ENCODE measurements at regions of chr10 and their contacts with region 1.

Region 1: DNA sequence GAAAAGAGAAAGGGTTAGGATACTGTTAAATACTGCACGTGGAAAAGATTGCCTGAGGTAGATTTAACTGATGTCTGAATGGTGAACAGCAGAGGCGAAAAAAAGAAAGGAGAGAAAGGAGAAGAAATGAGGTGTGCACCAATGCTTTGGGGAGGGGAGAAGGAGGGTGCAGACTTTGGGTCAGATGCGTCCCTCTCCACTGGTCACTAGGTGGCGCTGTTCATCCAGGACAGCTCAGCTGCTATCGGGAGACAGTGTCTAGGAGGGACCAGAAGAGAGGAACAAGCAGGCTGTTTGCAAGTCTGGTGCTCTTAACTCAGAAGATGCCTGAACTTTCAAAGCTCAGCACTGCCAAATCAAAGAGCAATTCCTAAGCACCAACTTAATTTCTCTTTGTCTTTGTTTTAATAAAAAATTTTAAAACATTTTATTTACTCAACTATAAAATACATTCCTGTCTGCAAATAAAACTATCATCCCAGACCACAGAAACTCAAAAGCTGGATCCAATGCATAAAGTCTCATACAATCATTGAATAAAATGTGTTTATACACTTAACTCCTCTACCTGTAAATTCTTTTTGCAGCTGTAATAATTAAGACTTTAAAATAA is 83.9 kb upstream of the PDLIM1 start:
- DNase-seq: peak; percentile 66 to 91 (median 76)
- H3K4me3 ChIP-seq: no peak overlapping the region
- H3K27ac ChIP-seq: no peak overlapping the region
- H3K4me1 ChIP-seq: peaks cover 0 to 2% (median 0%) of the 10 kb centered on the region in 3 donors
- H3K27me3 ChIP-seq: no peaks in the 10 kb centered on the region
- CTCF ChIP-seq: peak; percentile 83

Region 2: DNA sequence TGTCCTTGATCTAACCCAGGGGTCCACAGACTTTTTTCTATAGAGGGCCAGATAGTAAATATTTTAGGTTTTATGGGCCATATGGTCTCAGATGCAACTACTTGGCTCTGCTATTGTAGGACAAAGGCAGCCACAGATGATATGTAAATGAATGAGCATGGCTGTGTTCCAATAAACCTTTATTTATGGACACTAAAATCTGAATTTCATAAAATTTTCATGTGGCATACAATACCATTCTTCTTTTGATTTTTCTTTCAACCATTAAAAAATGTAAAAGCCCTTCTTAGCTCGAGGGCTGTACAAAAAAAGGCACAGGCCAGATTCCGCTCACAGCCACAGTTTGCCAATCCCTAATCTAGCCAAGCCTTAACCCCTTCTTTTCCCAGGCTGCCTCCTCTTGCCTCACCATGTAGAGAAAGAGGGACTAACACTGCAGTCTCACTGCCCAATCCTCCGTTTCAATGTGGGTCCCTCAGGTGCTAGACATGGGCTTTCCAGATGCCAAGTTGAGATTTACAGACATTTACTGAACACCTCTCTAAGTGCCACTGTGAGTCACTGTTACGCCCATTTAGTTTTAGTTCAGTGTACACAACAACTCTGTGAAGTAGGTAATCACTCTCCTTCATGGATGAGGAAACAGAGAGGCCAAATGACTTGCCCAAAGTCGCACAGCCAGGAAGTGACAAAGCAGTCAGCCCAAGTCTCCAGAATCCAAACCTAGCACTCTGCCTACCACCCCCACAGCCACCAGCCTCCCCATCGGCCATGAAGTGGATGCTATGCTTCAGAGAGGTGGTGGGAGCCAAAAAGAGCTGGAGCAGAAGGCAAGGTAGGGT is 48.7 kb after region 1 on chr10:
- intact Hi-C with region 1: loop called (anchors 10 kb)
- DNase-seq: no peak
- H3K4me3 ChIP-seq: no peak overlapping the region
- H3K27ac ChIP-seq: no peak overlapping the region
- H3K4me1 ChIP-seq: peaks cover 0 to 2% (median 0%) of the 10 kb centered on the region in 3 donors
- H3K27me3 ChIP-seq: no peaks in the 10 kb centered on the region
- CTCF ChIP-seq: no peak

Region 3: DNA sequence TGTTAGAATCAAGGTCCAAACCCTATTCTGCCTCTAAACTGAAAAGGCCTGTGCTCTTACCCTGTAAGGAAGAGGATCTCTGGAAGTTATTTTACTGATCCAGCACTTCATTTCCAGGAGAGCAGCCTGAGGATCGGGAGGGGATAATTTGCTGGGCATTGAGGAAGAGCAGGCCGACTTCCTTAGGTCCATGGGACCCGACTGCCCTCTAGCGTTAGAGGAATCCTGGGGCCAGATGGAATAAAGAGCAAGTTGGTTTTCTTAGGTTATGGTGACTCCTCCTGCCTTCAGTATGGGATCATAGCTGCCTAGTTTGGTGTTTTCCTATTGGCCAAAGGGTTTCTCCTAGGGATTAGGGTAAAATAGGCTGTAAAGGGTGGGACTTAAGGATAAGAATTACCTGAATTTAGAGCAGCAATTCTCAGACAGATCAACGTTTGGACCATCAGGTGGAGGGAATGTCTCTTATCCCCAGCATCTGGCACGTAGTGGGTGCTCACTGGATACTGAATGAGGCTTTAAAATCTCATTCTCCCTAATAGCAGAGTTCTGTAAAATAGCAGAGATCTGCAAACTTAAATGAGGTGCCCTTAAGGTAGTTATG is 226.5 kb after region 1 on chr10:
- intact Hi-C with region 1: loop called (anchors 10 kb)
- DNase-seq: peak; percentile 83 to 97 (median 89)
- H3K4me3 ChIP-seq: no peak overlapping the region
- H3K27ac ChIP-seq: no peak overlapping the region
- H3K4me1 ChIP-seq: no peaks in the 10 kb centered on the region
- H3K27me3 ChIP-seq: no peaks in the 10 kb centered on the region
- CTCF ChIP-seq: peak; percentile 96

Measured in kidney (tissue), 22 donors.